PC-9 (cell line): ENCODE measurements at regions of chr15 and their contacts with region 1.

Region 1: GRCh38 chr15:48423896-48424475 is 92.8 kb downstream of the DUT start:
- DNase-seq: peak in 1 of 2 experiments; percentile 8
- H3K4me3 ChIP-seq: no peak overlapping the region
- H3K27ac ChIP-seq: no peak overlapping the region
- H3K4me1 ChIP-seq: peaks cover 9% of the 10 kb centered on the region; the same call in 1 of the 2 replicates
- H3K27me3 ChIP-seq: no peaks in the 10 kb centered on the region
- CTCF ChIP-seq: no peak

Region 2: DNA sequence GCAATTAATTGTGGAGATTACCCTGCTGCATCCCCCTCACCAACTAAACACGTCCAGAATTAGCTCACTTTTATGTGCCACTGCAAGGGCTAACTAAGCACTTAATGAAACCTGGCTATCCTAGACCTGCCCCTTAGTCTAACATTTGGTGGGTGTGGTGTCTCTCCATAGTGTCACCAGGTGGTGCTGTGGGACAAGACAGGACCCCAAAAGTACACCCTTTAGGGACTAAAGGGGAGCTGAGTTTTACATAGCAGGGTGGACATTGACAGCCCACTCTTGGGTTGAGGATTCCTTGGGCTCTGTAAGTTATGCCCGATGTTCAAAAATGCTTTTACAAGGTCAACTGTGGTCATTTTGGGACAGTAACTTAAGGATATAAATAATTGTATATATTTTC is 87.0 kb before region 1 on chr15:
- CTCF ChIA-PET with region 1: no interaction called
- POLR2A ChIA-PET with region 1: interaction called, 16 read pairs
- intact Hi-C with region 1: no loop called
- DNase-seq: no peak
- H3K4me3 ChIP-seq: no peak overlapping the region
- H3K27ac ChIP-seq: no peak overlapping the region
- H3K4me1 ChIP-seq: peaks cover 7% of the 10 kb centered on the region
- H3K27me3 ChIP-seq: no peaks in the 10 kb centered on the region
- CTCF ChIP-seq: peak; percentile 40

Region 3: GRCh38 chr15:48472753-48473152 is 48.8 kb after region 1 on chr15:
- CTCF ChIA-PET with region 1: no interaction called
- POLR2A ChIA-PET with region 1: interaction called, 10 read pairs
- intact Hi-C with region 1: no loop called
- DNase-seq: no peak
- H3K4me3 ChIP-seq: no peak overlapping the region
- H3K27ac ChIP-seq: no peak overlapping the region
- H3K4me1 ChIP-seq: no peaks in the 10 kb centered on the region
- H3K27me3 ChIP-seq: no peaks in the 10 kb centered on the region
- CTCF ChIP-seq: no peak

Region 4: GRCh38 chr15:48774484-48774883 is 350.5 kb after region 1 on chr15:
- CTCF ChIA-PET with region 1: no interaction called
- POLR2A ChIA-PET with region 1: no interaction called
- intact Hi-C with region 1: no loop called
- DNase-seq: no peak
- H3K4me3 ChIP-seq: no peak overlapping the region
- H3K27ac ChIP-seq: no peak overlapping the region
- H3K4me1 ChIP-seq: no peaks in the 10 kb centered on the region
- H3K27me3 ChIP-seq: no peaks in the 10 kb centered on the region
- CTCF ChIP-seq: no peak

Region 5: GRCh38 chr15:49471733-49472132 is 1047.7 kb after region 1 on chr15:
- CTCF ChIA-PET with region 1: no interaction called
- POLR2A ChIA-PET with region 1: interaction called, 11 read pairs
- intact Hi-C with region 1: no loop called
- DNase-seq: no peak
- H3K4me3 ChIP-seq: no peak overlapping the region
- H3K27ac ChIP-seq: no peak overlapping the region
- H3K4me1 ChIP-seq: no peaks in the 10 kb centered on the region
- H3K27me3 ChIP-seq: no peaks in the 10 kb centered on the region
- CTCF ChIP-seq: no peak